ENCODE measurements at regions of chr17 and their contacts with region 1.

Region 1: DNA sequence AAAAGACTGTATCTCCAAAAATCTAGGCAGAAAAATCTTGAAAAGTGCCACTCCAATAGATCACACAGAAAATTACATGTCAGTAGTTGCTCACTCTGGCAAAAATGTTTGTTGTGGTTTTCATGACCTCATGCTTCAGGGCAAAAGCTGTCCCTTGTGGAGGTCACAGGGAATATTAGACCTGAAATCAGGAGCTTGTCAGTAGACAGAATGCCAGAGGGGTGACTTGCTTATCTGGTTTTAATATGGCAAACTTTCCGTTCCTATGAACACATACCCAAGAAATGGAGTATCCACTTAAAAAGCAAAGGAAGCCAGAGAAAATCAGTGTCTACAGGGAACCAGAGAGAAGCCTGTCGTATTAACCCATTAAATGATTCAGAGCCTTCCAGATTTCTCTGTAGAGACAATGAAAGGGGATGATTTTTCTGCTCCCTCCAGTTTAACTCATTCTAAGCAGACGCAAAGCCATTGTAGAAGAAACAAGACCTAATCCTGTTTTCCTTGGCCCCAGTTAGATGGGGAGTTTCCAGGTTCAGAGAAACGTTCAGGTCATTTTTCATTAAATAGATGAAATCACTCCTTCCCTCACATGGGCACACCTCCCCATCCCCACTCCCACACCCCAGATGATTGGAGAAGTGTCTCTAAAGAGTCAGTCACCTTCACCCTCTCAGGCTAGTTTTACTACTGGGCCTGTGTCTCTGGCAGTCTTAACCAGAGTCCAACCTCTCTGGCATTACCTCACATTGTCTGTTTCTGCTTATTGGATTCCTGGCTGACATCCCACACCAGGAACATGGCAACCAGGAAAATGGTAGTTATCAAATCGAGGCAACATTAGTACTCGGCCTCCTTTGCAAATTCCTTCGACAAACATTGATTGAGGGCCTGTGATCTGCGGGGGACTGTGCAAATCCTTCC is 6.0 kb downstream of the SOX9 start:
- DNase-seq: no peak
- ATAC-seq: peak; percentile 63
- H3K4me3 ChIP-seq: peak overlapping the region in 1 of 2 experiments; percentile 6; a peak in 2 of 4 replicates
- H3K27ac ChIP-seq: peak overlapping the region; percentile 91
- H3K4me1 ChIP-seq: peaks cover 54% of the 10 kb centered on the region
- H3K27me3 ChIP-seq: no peaks in the 10 kb centered on the region
- CTCF ChIP-seq: peak; percentile 5; the same call in 1 of the 2 replicates

Region 2: GRCh38 chr17:72142614-72143013 is 15.8 kb after region 1 on chr17:
- CTCF ChIA-PET with region 1: no interaction called
- POLR2A ChIA-PET with region 1: interaction called, 11 read pairs
- in situ Hi-C with region 1: no loop called
- intact Hi-C with region 1: no loop called
- DNase-seq: no peak
- ATAC-seq: no peak; the same call in 1 of the 2 replicates
- H3K4me3 ChIP-seq: no peak overlapping the region
- H3K27ac ChIP-seq: no peak overlapping the region
- H3K4me1 ChIP-seq: peaks cover 10% of the 10 kb centered on the region
- H3K27me3 ChIP-seq: no peaks in the 10 kb centered on the region
- CTCF ChIP-seq: no peak

Region 3: DNA sequence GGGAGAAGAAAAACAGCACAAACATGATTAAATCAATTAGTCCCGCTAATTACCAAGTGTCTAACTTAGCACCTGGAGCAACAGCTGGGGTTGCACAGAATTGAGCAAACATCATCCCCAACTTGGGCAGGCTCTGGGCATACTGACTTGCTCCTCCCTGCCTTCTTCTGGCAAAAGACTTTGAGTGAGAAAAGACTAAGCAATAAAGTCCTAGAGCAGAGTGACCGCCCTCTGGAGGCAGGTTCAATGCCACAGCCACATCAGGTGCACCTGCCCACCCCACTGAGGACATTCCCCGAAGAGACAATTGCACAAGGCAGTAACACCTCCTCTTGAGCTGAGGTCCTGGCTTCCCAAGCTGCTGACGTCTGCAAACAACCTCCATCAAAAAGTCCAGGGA is 352.3 kb after region 1 on chr17:
- CTCF ChIA-PET with region 1: no interaction called
- POLR2A ChIA-PET with region 1: no interaction called
- in situ Hi-C with region 1: loop called (anchors 25 kb)
- intact Hi-C with region 1: no loop called
- DNase-seq: no peak
- ATAC-seq: peak; percentile 46
- H3K4me3 ChIP-seq: no peak overlapping the region
- H3K27ac ChIP-seq: peak overlapping the region; percentile 94
- H3K4me1 ChIP-seq: peaks cover 60% of the 10 kb centered on the region
- H3K27me3 ChIP-seq: no peaks in the 10 kb centered on the region
- CTCF ChIP-seq: peak; percentile 78

Region 4: DNA sequence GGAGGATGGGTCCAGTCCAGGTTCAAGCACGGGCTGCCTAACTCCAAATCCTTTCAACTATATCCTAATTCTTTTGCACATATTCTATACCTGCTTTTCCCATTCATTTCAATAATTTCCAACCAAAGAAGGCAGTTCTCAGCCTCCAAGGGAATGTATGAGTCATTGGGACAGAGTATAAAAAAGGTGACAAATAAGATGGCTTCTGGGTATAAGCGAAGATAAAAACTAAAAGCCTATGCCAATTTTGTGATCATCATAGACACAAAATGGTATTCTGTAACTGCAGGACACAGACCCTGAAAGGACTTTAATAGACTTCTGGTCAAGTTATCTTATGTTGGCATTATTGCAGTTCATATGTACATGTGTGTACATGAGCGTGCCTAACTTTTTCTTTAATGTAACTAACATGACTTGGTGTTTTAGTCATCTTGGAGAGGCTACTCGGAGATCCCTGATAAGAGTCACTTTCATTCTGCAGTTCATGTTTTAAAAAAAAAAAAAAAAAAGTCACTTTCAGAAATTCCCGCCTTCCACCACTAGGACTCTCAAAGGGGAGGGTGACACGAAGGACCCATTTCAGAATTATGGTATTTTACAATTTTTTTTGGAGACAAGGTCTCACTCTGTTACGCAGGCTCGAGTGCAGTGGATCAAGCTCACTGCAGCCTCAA is 1083.3 kb after region 1 on chr17:
- CTCF ChIA-PET with region 1: no interaction called
- POLR2A ChIA-PET with region 1: no interaction called
- in situ Hi-C with region 1: no loop called
- intact Hi-C with region 1: no loop called
- DNase-seq: no peak
- ATAC-seq: no peak
- H3K4me3 ChIP-seq: no peak overlapping the region
- H3K27ac ChIP-seq: no peak overlapping the region
- H3K4me1 ChIP-seq: no peaks in the 10 kb centered on the region
- H3K27me3 ChIP-seq: no peaks in the 10 kb centered on the region
- CTCF ChIP-seq: no peak

Measured in Panc1 (cell line).